Gastrocnemius medialis (tissue), 4 donors: ENCODE measurements at regions of chrX and their contacts with region 1.

Region 1: GRCh38 chrX:18698737-18699650 is 8.5 kb upstream of the PPEF1 start:
- DNase-seq: peak in 1 of 2 donors; percentile 22
- ATAC-seq: peak; percentile 89 to 92
- H3K4me3 ChIP-seq: no peak overlapping the region
- H3K27ac ChIP-seq: peak overlapping the region; percentile 60 to 75 (median 72)
- H3K4me1 ChIP-seq: no peaks in the 10 kb centered on the region
- H3K27me3 ChIP-seq: no peaks in the 10 kb centered on the region
- CTCF ChIP-seq: no peak
- POLR2A ChIP-seq: no peak

Region 2: GRCh38 chrX:17580539-17581152 is 1118.3 kb before region 1 on chrX:
- in situ Hi-C with region 1: no loop called
- intact Hi-C with region 1: no loop called
- DNase-seq: peak in 1 of 2 donors; percentile 15
- ATAC-seq: peak; percentile 86 to 91
- H3K4me3 ChIP-seq: no peak overlapping the region
- H3K27ac ChIP-seq: peak overlapping the region in 1 of 4 donors; percentile 6
- H3K4me1 ChIP-seq: no peaks in the 10 kb centered on the region
- H3K27me3 ChIP-seq: no peaks in the 10 kb centered on the region
- CTCF ChIP-seq: no peak
- POLR2A ChIP-seq: no peak

Region 3: DNA sequence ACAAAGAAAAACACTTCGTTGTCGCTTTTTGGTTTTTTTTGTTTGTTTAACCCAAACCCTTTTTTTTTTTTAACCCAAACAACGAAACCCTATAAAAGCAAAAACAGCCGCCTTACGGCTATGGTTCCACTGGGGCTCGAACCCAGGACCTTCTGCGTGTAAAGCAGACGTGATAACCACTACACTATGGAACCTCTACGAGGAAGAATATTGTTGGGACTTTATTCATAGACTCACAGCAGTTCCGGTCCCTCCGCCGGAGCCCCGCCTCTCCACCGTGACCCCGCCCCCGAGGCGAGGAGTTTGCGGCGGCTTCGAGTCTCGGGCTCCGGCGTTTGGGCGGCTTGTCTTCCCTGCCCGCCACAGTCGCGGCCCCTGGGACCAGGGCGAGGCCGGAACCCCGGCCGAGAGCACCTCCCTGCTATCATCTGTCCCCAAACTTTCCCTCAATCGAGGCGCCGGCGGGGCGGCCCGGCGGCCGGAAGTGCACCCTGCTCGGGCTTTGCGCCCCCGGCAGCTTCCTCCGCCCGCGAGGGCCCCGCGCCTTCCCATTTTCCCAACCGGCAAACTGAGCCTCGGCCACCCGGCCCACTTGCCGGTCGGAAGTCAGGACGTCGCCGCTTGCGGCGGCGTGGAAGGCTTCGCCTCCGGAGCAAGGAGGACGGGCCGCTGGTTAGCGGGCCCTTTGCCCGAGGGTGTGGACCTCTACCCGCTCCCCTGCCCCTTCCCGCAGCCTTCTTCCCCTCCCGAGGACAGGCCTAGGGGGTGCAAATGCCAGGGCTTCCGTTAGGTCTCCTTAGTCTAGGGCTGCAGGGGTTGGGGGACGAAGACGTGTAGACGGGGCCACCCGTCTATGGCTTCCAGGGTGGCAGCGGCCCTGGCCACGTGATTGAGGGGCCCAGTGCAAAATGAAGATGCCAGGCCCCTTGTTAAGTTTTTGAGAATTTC is 23.9 kb before region 1 on chrX:
- in situ Hi-C with region 1: no loop called
- intact Hi-C with region 1: loop called (anchors 2 kb)
- DNase-seq: peak; percentile 35 to 58
- ATAC-seq: peak; percentile 89 to 91
- H3K4me3 ChIP-seq: peak overlapping the region; percentile 66 to 79 (median 70)
- H3K27ac ChIP-seq: peak overlapping the region; percentile 82 to 89 (median 85)
- H3K4me1 ChIP-seq: peaks cover 0 to 4% of the 10 kb centered on the region in 2 donors
- H3K27me3 ChIP-seq: no peaks in the 10 kb centered on the region
- CTCF ChIP-seq: no peak
- POLR2A ChIP-seq: peak; percentile 24 to 38

Region 4: DNA sequence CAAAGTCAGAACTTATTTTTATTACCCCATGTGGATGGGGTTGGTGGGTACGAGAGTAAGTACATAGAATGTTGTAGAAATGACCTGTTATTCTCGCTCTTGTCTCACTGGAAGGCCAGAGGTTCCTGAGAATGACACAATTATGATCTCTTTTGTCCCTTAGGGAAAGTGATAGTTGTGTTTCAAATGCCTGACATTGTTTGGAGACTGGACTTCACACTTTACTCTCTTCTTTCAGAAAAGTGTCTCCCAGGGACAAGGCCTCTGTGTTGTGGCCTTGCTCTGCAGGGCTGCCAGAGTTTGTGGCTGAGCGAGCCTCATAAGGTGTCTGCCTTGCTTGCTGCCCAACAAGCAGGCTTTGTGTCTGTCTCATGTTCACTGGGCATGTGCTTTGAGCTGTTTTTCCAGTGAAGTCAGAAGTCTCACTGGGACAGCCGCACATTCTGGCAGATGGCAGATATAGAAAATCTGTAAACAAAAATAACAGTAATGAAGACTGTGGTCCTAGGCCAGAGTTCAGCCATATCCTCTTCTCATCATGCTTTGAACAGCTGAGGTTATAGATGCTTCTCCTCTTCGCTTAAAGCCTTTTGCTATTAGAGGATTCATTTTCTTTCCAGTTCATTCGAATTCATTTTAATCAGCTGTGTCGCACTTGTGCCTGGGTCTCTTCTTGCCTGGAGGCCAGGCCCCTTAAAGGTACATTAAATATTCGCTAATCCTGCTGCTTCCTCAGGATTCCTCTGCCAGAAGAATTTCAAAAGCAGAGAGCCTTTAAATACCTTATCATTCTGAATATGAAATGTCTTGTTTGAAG is 22.9 kb after region 1 on chrX:
- in situ Hi-C with region 1: no loop called
- intact Hi-C with region 1: loop called (anchors 2 kb)
- DNase-seq: peak in 1 of 2 donors; percentile 4
- ATAC-seq: peak in 1 of 2 donors; percentile 78
- H3K4me3 ChIP-seq: no peak overlapping the region
- H3K27ac ChIP-seq: peak overlapping the region; percentile 33 to 60 (median 48)
- H3K4me1 ChIP-seq: no peaks in the 10 kb centered on the region
- H3K27me3 ChIP-seq: no peaks in the 10 kb centered on the region
- CTCF ChIP-seq: no peak
- POLR2A ChIP-seq: no peak

Region 5: GRCh38 chrX:18833071-18833731 is 134.2 kb after region 1 on chrX:
- in situ Hi-C with region 1: no loop called
- intact Hi-C with region 1: loop called (anchors 2 kb)
- DNase-seq: peak; percentile 64 to 82
- ATAC-seq: peak; percentile 98 to 99
- H3K4me3 ChIP-seq: peak overlapping the region; percentile 39 to 50 (median 47)
- H3K27ac ChIP-seq: peak overlapping the region; percentile 80 to 89 (median 86)
- H3K4me1 ChIP-seq: peaks cover 0 to 3% of the 10 kb centered on the region in 2 donors
- H3K27me3 ChIP-seq: no peaks in the 10 kb centered on the region
- CTCF ChIP-seq: no peak
- POLR2A ChIP-seq: peak; percentile 54 to 63